ENCODE measurements at regions of chr7 and their contacts with region 1.

Region 1: DNA sequence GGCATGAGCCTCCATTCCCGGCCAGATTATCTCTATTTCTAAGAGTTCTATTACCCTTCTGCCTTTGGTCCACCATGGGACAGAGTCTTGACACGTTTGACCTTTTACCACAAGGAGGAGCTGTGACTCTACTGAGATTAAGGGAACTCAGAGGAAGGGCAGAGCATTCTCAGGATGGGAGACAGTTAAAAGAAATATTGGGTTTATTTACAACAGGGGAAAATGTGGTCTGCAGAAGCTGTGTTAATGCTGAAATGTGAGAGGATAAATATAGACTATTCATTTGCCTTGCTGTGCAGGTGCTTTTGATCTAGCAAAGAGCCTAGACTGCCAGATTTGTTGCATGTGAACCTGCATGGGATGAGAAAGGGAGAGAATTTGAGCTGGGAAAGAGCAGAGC is 45.8 kb upstream of the PRSS58 start:
- DNase-seq: peak in 2 of 35 experiments; percentile 24 to 67
- ATAC-seq: peak; percentile 45 to 67 (median 53)
- H3K4me3 ChIP-seq: no peak overlapping the region
- H3K4me3 Mint-ChIP-seq: peak overlapping the region in 1 of 3 donors; percentile 4
- H3K27ac ChIP-seq: no peak overlapping the region
- H3K27ac Mint-ChIP-seq: peak overlapping the region; percentile 19 to 49
- H3K4me1 ChIP-seq: peaks cover 12 to 14% of the 10 kb centered on the region in 2 experiments
- H3K4me1 Mint-ChIP-seq: peaks cover 24 to 39% (median 24%) of the 10 kb centered on the region in 3 donors
- H3K27me3 ChIP-seq: peaks cover 0 to 6% of the 10 kb centered on the region in 2 experiments
- H3K27me3 Mint-ChIP-seq: peaks cover 4 to 25% of the 10 kb centered on the region in 2 donors

Region 2: GRCh38 chr7:140625908-140626868 is 1677.5 kb before region 1 on chr7:
- CTCF ChIA-PET with region 1: interaction called in 1 of 2 experiments, 14 read pairs
- POLR2A ChIA-PET with region 1: no interaction called
- DNase-seq: no peak
- ATAC-seq: no peak
- H3K4me3 ChIP-seq: no peak overlapping the region
- H3K4me3 Mint-ChIP-seq: no peak overlapping the region
- H3K27ac ChIP-seq: no peak overlapping the region
- H3K27ac Mint-ChIP-seq: no peak overlapping the region
- H3K4me1 ChIP-seq: no peaks in the 10 kb centered on the region
- H3K4me1 Mint-ChIP-seq: no peaks in the 10 kb centered on the region
- H3K27me3 ChIP-seq: peaks cover 0 to 13% of the 10 kb centered on the region in 2 experiments
- H3K27me3 Mint-ChIP-seq: peaks cover 0 to 5% of the 10 kb centered on the region in 2 donors

Region 3: GRCh38 chr7:142329062-142329790 is 25.6 kb after region 1 on chr7:
- CTCF ChIA-PET with region 1: no interaction called
- POLR2A ChIA-PET with region 1: no interaction called
- DNase-seq: no peak
- ATAC-seq: no peak
- H3K4me3 ChIP-seq: no peak overlapping the region
- H3K4me3 Mint-ChIP-seq: peak overlapping the region in 1 of 3 donors; percentile 27
- H3K27ac ChIP-seq: no peak overlapping the region
- H3K27ac Mint-ChIP-seq: no peak overlapping the region
- H3K4me1 ChIP-seq: no peaks in the 10 kb centered on the region
- H3K4me1 Mint-ChIP-seq: peaks cover 8 to 11% (median 10%) of the 10 kb centered on the region in 3 donors
- H3K27me3 ChIP-seq: peaks cover 0 to 22% of the 10 kb centered on the region in 2 experiments
- H3K27me3 Mint-ChIP-seq: peaks cover 22 to 25% of the 10 kb centered on the region in 2 donors